B cell (primary cell): ENCODE measurements at regions of chr6 and their contacts with region 1.

Region 1: GRCh38 chr6:107847844-107848802 is 24.0 kb upstream of the SCML4 start:
- DNase-seq: peak; percentile 85
- ATAC-seq: peak; percentile 90
- H3K4me3 ChIP-seq: peak overlapping the region; percentile 3 to 65 (median 56)
- H3K4me3 Mint-ChIP-seq: peak overlapping the region; percentile 85
- H3K27ac ChIP-seq: peak overlapping the region in 1 of 2 donors; percentile 34
- H3K27ac Mint-ChIP-seq: no peak overlapping the region
- H3K4me1 ChIP-seq: peaks cover 9 to 13% of the 10 kb centered on the region in 2 donors
- H3K4me1 Mint-ChIP-seq: peaks cover 15% of the 10 kb centered on the region
- H3K27me3 ChIP-seq: peaks cover 0 to 9% (median 2%) of the 10 kb centered on the region in 4 experiments
- H3K27me3 Mint-ChIP-seq: peaks cover 7% of the 10 kb centered on the region
- CTCF ChIP-seq: peak; percentile 96

Region 2: GRCh38 chr6:106339334-106340029 is 1508.6 kb before region 1 on chr6:
- CTCF ChIA-PET with region 1: interaction called, 11 read pairs
- POLR2A ChIA-PET with region 1: no interaction called
- intact Hi-C with region 1: no loop called
- DNase-seq: peak; percentile 66
- ATAC-seq: peak; percentile 74
- H3K4me3 ChIP-seq: peak overlapping the region in 2 of 5 experiments; percentile 17 to 24
- H3K4me3 Mint-ChIP-seq: peak overlapping the region; percentile 61
- H3K27ac ChIP-seq: no peak overlapping the region
- H3K27ac Mint-ChIP-seq: no peak overlapping the region
- H3K4me1 ChIP-seq: peaks cover 5% of the 10 kb centered on the region in 2 donors
- H3K4me1 Mint-ChIP-seq: peaks cover 2% of the 10 kb centered on the region
- H3K27me3 ChIP-seq: peaks cover 0 to 2% (median 0%) of the 10 kb centered on the region in 4 experiments
- H3K27me3 Mint-ChIP-seq: peaks cover 31% of the 10 kb centered on the region
- CTCF ChIP-seq: peak; percentile 81

Region 3: DNA sequence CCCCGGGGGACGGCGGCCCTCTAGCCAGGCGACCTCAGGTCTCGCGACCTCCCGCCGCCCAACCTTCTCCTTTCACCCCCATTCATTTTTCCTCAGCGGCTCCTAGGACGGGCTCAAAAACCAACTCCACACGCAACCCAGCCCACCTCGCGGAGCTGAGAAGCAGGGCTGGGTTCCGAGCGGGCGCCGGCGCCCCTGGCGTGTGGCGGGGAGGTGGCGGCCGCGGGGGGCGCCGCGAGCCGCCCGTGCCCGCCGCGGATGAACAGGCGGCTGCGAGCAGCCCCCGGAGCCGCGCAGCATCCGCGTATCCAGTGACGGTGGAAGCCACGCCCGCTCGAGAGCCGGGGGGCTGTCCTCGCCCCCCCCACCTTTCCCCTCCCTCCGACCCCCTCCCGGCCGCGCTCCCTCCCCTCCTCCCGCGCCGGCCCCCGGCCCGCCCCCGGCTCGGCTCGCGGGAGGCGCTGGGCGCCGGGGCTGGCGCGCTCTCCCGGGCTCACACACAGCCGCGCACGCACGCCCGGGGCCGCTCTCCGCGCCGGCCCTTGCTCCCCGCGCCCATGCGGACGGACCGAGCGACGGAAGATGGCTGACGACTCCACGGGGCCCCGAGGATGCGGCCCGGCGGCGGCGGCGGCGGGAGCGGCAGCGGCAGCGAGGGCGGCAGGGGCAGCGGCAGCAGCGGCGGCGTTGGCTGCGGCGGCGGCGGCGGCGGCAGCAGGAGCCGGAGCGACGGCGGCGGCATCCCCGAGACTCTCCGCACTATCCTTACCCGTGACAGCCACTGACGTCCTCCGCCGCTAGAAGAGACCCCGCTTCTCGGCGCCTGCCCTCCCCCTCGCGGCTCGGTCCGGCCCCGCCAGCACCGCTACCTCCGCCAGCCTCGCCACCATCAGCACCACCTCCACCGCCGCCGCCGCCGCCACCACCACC is 358.2 kb before region 1 on chr6 and contains the start of gene SOBP:
- CTCF ChIA-PET with region 1: no interaction called
- POLR2A ChIA-PET with region 1: no interaction called
- intact Hi-C with region 1: loop called (anchors 10 kb)
- DNase-seq: peak; percentile 77
- ATAC-seq: peak; percentile 65
- H3K4me3 ChIP-seq: peak within 1 kb of the TSS; percentile 51 to 78 (median 75)
- H3K4me3 Mint-ChIP-seq: peak within 1 kb of the TSS; percentile 93
- H3K27ac ChIP-seq: no peak within 1 kb of the TSS
- H3K27ac Mint-ChIP-seq: peak within 1 kb of the TSS; percentile 57
- H3K4me1 ChIP-seq: peaks cover 33 to 40% of the 10 kb centered on the region in 2 donors
- H3K4me1 Mint-ChIP-seq: peaks cover 32% of the 10 kb centered on the region
- H3K27me3 ChIP-seq: peaks cover 4 to 63% (median 49%) of the 10 kb centered on the region in 4 experiments
- H3K27me3 Mint-ChIP-seq: peaks cover 31% of the 10 kb centered on the region
- CTCF ChIP-seq: no peak
- total RNA-seq, gene SOBP: 1.3 and 1.5 TPM in 2 replicates

Region 4: GRCh38 chr6:107511511-107511993 is 336.6 kb before region 1 on chr6:
- CTCF ChIA-PET with region 1: no interaction called
- POLR2A ChIA-PET with region 1: no interaction called
- intact Hi-C with region 1: no loop called
- DNase-seq: no peak
- ATAC-seq: no peak
- H3K4me3 ChIP-seq: no peak overlapping the region
- H3K4me3 Mint-ChIP-seq: no peak overlapping the region
- H3K27ac ChIP-seq: no peak overlapping the region
- H3K27ac Mint-ChIP-seq: no peak overlapping the region
- H3K4me1 ChIP-seq: no peaks in the 10 kb centered on the region
- H3K4me1 Mint-ChIP-seq: no peaks in the 10 kb centered on the region
- H3K27me3 ChIP-seq: no peaks in the 10 kb centered on the region
- H3K27me3 Mint-ChIP-seq: no peaks in the 10 kb centered on the region
- CTCF ChIP-seq: no peak

Region 5: DNA sequence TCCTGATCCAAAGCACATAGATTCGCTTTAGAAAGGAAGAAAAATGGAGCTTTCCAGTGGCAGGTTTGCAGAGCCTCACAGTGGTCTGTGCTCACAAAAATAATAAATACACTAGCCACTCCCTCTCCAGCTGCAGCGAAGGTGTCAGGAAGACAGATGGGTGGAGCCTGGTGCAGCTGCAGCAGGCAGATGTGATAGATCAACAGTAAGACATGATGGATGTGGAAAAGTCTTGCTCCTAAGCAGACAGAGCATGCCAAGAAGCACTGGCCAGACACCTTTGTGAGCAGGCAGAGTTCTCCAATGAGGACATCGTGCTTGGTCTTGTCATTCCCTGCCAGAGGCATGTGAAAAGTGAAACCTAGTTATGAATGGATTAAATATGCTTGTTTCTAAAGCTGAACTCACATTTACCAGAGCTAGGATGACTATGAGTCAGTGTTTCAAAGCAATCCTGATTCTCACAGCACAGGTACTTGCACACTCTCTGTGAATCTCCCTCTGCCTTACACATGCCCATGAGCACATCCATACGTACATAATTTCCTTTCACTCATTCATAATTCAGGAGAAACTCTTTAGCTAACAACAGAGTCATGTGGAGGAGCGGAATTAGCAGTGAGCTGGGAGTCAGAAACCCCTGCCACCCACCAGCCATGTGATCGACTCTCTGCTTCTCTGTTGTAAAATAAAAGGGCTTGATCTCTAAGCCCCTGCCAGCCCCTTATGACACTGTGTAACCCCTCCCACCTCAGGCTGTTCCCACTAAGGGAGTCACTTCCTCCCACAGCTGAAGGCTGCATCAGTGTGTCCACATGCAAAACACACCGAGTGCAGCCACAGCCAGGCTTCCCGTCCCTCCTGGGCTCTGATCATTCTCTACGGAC is 135.2 kb before region 1 on chr6:
- CTCF ChIA-PET with region 1: interaction called, 10 read pairs
- POLR2A ChIA-PET with region 1: no interaction called
- intact Hi-C with region 1: no loop called
- DNase-seq: peak; percentile 29
- ATAC-seq: peak; percentile 35
- H3K4me3 ChIP-seq: peak overlapping the region in 2 of 5 experiments; percentile 9 to 30
- H3K4me3 Mint-ChIP-seq: peak overlapping the region; percentile 72
- H3K27ac ChIP-seq: no peak overlapping the region
- H3K27ac Mint-ChIP-seq: no peak overlapping the region
- H3K4me1 ChIP-seq: peaks cover 15 to 31% of the 10 kb centered on the region in 2 donors
- H3K4me1 Mint-ChIP-seq: peaks cover 28% of the 10 kb centered on the region
- H3K27me3 ChIP-seq: no peaks in the 10 kb centered on the region
- H3K27me3 Mint-ChIP-seq: no peaks in the 10 kb centered on the region
- CTCF ChIP-seq: no peak

Region 6: GRCh38 chr6:107793191-107793590 is 54.9 kb before region 1 on chr6:
- CTCF ChIA-PET with region 1: interaction called, 5 read pairs
- POLR2A ChIA-PET with region 1: no interaction called
- intact Hi-C with region 1: loop called (anchors 10 kb)
- DNase-seq: no peak
- ATAC-seq: no peak
- H3K4me3 ChIP-seq: no peak overlapping the region
- H3K4me3 Mint-ChIP-seq: no peak overlapping the region
- H3K27ac ChIP-seq: peak overlapping the region in 1 of 2 donors; percentile 20
- H3K27ac Mint-ChIP-seq: no peak overlapping the region
- H3K4me1 ChIP-seq: peaks cover 4 to 12% of the 10 kb centered on the region in 2 donors
- H3K4me1 Mint-ChIP-seq: peaks cover 28% of the 10 kb centered on the region
- H3K27me3 ChIP-seq: no peaks in the 10 kb centered on the region
- H3K27me3 Mint-ChIP-seq: no peaks in the 10 kb centered on the region
- CTCF ChIP-seq: no peak

Region 7: GRCh38 chr6:107827541-107827940 is 20.6 kb before region 1 on chr6:
- CTCF ChIA-PET with region 1: interaction called, 40 read pairs
- POLR2A ChIA-PET with region 1: interaction called, 3 read pairs
- intact Hi-C with region 1: no loop called
- DNase-seq: peak; percentile 52
- ATAC-seq: no peak
- H3K4me3 ChIP-seq: no peak overlapping the region
- H3K4me3 Mint-ChIP-seq: no peak overlapping the region
- H3K27ac ChIP-seq: no peak overlapping the region
- H3K27ac Mint-ChIP-seq: no peak overlapping the region
- H3K4me1 ChIP-seq: peaks cover 15 to 21% of the 10 kb centered on the region in 2 donors
- H3K4me1 Mint-ChIP-seq: peaks cover 24% of the 10 kb centered on the region
- H3K27me3 ChIP-seq: no peaks in the 10 kb centered on the region
- H3K27me3 Mint-ChIP-seq: no peaks in the 10 kb centered on the region
- CTCF ChIP-seq: no peak